ENCODE measurements at regions of chr5 and their contacts with region 1.

Region 1: DNA sequence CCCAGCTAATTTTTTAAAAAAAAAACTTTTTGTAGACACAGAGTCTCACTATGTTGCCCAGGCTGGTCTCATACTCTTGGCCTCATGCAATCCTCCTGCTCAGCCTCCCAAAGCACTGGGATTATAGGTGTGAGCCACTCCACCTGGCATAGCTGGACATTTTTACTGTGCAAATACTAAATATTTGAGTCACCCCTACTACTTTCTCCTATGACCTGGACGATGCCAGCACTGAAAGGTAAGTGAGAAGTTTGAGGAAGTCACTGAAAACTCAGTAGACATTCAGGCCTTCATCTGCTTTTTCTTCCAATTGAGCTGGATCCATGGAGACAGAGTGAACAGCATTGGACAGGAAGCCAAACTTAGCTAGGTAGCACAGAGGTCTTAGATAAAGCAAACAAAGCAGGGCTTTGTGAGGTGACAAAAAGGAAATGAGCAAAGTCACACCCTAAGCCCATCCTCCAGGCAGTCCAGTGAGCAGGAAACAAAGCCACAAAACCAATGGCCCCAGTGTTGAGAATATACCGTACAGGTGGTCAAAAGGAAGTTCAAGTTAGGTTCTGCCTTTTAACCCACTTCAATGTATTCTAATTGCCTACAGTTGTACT is 192.6 kb upstream of the RASA1 start:
- DNase-seq: peak; percentile 7
- ATAC-seq: peak; percentile 65
- H3K4me3 Mint-ChIP-seq: no peak overlapping the region
- H3K27ac Mint-ChIP-seq: peak overlapping the region; percentile 34
- H3K4me1 Mint-ChIP-seq: peaks cover 29% of the 10 kb centered on the region
- H3K27me3 Mint-ChIP-seq: no peaks in the 10 kb centered on the region

Region 2: DNA sequence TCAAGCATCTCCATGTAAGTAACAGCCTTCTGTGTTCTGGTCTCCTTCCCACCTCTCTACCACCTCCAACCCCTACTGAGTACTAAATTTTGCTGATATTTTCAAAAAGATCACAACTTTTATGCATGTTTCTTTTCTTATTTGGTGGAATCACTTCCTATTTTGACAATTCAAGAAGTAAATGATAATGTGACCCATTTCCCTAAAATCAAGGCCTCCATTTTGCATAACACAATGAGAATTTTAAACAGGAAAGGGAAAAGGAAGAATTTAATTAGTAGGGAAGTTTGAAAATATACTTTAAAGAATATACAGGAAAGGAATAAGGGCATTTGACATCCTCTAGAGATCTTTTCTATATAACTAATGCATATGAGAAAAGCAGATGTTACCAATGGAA is 20.2 kb before region 1 on chr5:
- CTCF ChIA-PET with region 1: no interaction called
- POLR2A ChIA-PET with region 1: no interaction called
- intact Hi-C with region 1: loop called in 1 of 2 experiments (anchors 1 kb)
- DNase-seq: no peak
- ATAC-seq: no peak
- H3K4me3 Mint-ChIP-seq: no peak overlapping the region
- H3K27ac Mint-ChIP-seq: no peak overlapping the region
- H3K4me1 Mint-ChIP-seq: no peaks in the 10 kb centered on the region
- H3K27me3 Mint-ChIP-seq: no peaks in the 10 kb centered on the region

Region 3: DNA sequence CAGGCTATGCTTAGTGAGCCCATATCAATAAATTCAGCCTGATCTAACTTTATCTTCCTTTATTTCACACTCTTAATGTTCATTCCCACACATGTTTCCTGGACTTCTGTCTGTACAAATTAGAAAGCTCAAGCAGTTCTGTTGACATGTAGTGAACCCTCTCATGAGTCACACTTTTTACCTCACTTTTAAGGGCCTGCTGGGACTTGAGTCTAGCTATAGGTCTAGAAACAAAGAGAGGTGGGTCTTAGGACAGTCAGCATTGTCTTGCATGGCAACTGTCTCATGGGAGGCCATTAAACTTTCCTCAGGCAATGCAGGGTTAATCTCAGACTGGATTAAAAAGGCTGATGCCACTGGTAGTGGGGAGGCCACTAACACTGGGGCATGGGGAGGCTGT is 346.3 kb after region 1 on chr5:
- CTCF ChIA-PET with region 1: no interaction called
- POLR2A ChIA-PET with region 1: no interaction called
- intact Hi-C with region 1: no loop called
- DNase-seq: no peak
- ATAC-seq: no peak
- H3K4me3 Mint-ChIP-seq: no peak overlapping the region
- H3K27ac Mint-ChIP-seq: no peak overlapping the region
- H3K4me1 Mint-ChIP-seq: peaks cover 1% of the 10 kb centered on the region
- H3K27me3 Mint-ChIP-seq: no peaks in the 10 kb centered on the region

Measured in activated CD4-positive, alpha-beta T cell treated with anti-CD3 and anti-CD28 coated beads for 36 hours (primary cell).